Activated CD4-positive, alpha-beta memory T cell treated with anti-CD3 and anti-CD28 coated beads, Interleukin-2, amount 10 ng/mL, durations not matched to agents 7 days and 5 days (primary cell): ENCODE measurements at regions of chr12 and their contacts with region 1.

Region 1: DNA sequence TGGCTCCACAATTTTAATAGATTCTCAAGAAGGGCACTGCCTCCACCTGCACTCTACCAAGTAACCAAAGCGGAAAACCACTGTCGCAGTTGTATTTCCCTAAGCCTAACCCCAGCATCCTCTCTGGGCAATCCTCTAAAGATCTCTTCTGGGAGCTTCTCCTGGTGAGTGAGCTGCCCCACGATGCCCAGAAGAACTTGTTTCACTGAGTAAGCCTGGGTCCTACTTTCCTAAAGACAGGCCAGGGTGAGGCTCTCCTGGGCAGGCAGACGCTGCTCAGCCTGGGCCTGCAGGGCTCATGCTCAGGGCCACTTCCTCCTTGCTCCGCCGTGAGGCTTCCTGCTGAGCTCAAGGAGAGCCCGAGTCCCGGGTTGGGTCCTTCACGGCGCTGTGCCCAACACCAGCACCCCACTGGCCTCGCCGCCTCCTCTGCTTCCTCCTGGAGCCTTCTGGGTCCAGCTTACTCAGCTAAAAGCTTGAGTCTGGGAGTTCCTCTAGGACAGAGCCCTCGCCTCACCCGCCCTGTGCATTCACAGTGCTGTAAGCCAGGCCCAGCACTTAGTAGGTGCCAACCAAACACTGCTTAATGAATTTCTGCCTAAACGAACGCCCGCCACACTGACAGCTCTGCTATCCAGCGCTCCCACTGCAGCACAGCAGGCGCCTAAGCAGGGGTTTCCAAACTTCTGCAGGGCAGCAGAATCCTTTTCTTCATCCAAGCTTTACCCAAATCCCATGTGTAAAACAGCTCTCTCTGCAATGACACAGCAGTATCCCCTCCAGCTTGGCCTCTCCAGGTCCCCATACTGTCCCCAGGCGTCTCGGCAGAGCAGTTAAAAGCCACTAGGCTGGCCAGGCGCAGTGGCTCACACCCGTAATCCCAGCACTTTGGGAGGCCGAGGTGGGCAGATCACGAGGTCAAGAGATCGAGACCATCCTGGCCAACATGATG is 5.7 kb downstream of the RAB35 start:
- DNase-seq: peak; percentile 66
- H3K4me3 Mint-ChIP-seq: peak overlapping the region; percentile 66
- H3K27ac Mint-ChIP-seq: peak overlapping the region; percentile 91
- H3K4me1 Mint-ChIP-seq: peaks cover 78% of the 10 kb centered on the region
- H3K27me3 Mint-ChIP-seq: no peaks in the 10 kb centered on the region

Region 2: DNA sequence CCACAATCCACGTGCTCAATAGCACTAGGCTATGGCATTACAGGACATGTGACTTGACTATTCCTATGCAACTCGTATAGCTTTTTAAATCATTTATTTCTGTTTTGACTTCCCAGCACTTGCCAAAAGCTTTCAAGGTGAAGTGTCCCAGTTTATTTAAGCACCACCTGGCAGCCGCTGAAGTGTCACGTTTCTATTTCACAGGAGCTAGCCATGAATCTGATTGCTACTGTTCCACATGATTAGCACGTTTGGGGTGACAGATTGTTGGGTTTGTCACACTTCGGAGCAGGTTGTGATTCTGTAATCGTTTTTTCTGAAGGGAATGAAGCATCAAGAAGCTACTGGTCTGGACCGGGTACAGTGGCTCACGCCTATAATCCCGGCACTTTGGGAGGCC is 161.7 kb before region 1 on chr12:
- CTCF ChIA-PET with region 1: no interaction called
- POLR2A ChIA-PET with region 1: no interaction called
- DNase-seq: no peak
- H3K4me3 Mint-ChIP-seq: no peak overlapping the region
- H3K27ac Mint-ChIP-seq: no peak overlapping the region
- H3K4me1 Mint-ChIP-seq: no peaks in the 10 kb centered on the region
- H3K27me3 Mint-ChIP-seq: peaks cover 2% of the 10 kb centered on the region

Region 3: GRCh38 chr12:120100435-120101029 is 10.3 kb before region 1 on chr12:
- CTCF ChIA-PET with region 1: interaction called, 3 read pairs
- POLR2A ChIA-PET with region 1: interaction called, 70 read pairs
- DNase-seq: no peak
- H3K4me3 Mint-ChIP-seq: no peak overlapping the region
- H3K27ac Mint-ChIP-seq: peak overlapping the region; percentile 2
- H3K4me1 Mint-ChIP-seq: peaks cover 31% of the 10 kb centered on the region
- H3K27me3 Mint-ChIP-seq: no peaks in the 10 kb centered on the region